ENCODE measurements at regions of chr1 and their contacts with region 1.

Region 1: DNA sequence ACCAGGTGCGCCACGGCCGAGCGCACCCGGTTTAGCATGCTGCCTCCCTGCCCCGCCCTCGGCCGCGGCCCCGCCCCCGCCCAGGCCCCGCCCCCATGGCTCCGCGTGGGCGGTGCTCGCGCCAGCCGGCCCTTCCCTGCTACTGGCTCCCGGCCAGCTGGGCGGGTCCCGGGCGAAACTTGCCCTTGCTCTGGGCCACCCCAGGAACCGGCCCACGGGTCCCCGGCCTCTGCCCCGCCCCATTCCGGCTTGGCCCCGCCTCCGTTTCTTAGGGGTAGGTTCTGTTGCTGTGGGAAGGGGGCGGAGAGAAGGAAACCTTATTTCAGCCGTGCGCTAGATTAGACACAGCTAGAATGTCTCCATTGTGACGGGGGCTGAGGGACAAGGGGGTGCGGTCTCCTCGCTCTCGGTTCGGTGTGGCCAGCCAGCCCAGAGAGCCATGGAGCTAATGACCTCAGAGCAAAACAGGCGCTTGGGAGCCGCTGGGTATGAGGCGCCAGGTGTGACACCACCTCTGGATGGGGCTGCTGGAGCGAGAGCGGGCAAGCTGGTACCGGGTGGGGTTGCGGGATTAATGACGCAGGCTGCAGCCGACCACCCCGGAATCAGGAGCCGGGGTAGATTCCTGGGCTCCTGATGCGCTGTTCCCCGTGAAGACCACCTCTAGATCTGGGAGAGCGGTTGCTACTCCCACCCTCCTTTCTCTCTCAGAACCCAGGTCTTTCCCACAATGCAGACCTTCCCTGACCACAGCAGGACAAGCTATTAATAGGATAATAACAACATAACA is at the start of gene PPM1J:
- DNase-seq: no peak
- H3K4me3 ChIP-seq: peak within 1 kb of the TSS; percentile 68
- CTCF ChIP-seq: no peak

Region 2: GRCh38 chr1:112390775-112391602 is 324.5 kb before region 1 on chr1:
- CTCF ChIA-PET with region 1: interaction called, 24 read pairs
- POLR2A ChIA-PET with region 1: interaction called, 3 read pairs
- DNase-seq: peak; percentile 67
- H3K4me3 ChIP-seq: peak overlapping the region; percentile 50
- CTCF ChIP-seq: peak; percentile 79

Region 3: DNA sequence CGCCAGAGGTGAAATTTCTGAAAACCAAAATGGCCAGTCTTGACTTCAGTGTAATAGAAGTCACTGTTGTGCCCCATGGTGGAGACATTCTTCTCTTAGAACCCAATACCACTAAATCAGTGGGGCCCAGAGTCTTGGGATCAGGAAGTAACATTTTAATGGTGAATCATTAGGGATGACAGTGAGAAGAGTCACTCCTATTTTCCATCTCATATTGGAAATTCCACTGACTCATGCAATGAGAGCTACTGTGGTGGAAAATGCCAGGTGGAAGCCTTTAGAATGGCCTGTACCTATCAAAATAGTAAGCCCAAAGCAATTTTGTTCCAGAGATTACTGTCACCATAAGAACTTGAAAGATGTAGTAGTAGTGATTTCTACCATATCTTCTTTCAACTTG is 20.3 kb after region 1 on chr1:
- CTCF ChIA-PET with region 1: interaction called, 264 read pairs
- POLR2A ChIA-PET with region 1: no interaction called
- DNase-seq: no peak
- H3K4me3 ChIP-seq: no peak overlapping the region
- CTCF ChIP-seq: no peak

Region 4: GRCh38 chr1:112762541-112763517 is 47.4 kb after region 1 on chr1:
- CTCF ChIA-PET with region 1: interaction called, 92 read pairs
- POLR2A ChIA-PET with region 1: no interaction called
- DNase-seq: no peak
- H3K4me3 ChIP-seq: no peak overlapping the region
- CTCF ChIP-seq: no peak

Region 5: GRCh38 chr1:112794654-112795239 is 79.3 kb after region 1 on chr1:
- CTCF ChIA-PET with region 1: interaction called, 1,029 read pairs
- POLR2A ChIA-PET with region 1: no interaction called
- DNase-seq: no peak
- H3K4me3 ChIP-seq: no peak overlapping the region
- CTCF ChIP-seq: no peak

Region 6: DNA sequence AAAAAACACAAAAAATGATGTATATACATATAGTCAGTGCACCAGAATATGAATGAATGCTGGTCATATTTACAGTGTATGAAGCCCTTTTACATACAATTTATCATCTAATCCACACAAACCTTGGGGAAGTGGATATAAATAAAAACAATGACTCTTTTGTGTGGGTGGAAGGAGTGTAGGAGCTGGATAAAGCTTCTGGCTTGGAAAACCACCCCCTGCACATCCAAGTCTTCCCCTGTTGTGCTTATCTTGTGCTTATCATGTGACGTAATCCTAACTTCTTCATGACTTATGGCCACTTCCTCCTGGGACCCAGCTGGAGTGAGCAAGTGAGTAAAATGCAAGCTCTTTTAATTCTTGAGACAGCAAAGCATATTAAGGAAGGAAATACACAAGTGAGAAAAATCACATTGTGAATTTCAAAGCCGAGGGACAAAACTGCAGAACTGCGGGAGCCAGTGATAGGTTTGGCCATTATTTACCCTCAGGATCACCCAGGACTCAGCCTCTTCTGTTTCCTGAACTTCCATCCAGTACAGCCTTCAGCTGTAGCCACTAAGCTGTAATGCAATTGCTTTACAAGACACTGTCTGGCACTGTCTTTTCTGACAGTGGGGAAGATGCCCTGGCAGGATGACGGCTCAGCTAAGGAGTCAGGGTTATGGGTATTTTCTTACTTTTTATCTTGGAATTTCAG is 103.7 kb after region 1 on chr1:
- CTCF ChIA-PET with region 1: interaction called, 10 read pairs
- POLR2A ChIA-PET with region 1: no interaction called
- DNase-seq: no peak
- H3K4me3 ChIP-seq: no peak overlapping the region
- CTCF ChIP-seq: no peak

Region 7: GRCh38 chr1:112925015-112925414 is 209.6 kb after region 1 on chr1:
- CTCF ChIA-PET with region 1: no interaction called
- POLR2A ChIA-PET with region 1: no interaction called
- DNase-seq: no peak
- H3K4me3 ChIP-seq: no peak overlapping the region
- CTCF ChIP-seq: no peak

Region 8: DNA sequence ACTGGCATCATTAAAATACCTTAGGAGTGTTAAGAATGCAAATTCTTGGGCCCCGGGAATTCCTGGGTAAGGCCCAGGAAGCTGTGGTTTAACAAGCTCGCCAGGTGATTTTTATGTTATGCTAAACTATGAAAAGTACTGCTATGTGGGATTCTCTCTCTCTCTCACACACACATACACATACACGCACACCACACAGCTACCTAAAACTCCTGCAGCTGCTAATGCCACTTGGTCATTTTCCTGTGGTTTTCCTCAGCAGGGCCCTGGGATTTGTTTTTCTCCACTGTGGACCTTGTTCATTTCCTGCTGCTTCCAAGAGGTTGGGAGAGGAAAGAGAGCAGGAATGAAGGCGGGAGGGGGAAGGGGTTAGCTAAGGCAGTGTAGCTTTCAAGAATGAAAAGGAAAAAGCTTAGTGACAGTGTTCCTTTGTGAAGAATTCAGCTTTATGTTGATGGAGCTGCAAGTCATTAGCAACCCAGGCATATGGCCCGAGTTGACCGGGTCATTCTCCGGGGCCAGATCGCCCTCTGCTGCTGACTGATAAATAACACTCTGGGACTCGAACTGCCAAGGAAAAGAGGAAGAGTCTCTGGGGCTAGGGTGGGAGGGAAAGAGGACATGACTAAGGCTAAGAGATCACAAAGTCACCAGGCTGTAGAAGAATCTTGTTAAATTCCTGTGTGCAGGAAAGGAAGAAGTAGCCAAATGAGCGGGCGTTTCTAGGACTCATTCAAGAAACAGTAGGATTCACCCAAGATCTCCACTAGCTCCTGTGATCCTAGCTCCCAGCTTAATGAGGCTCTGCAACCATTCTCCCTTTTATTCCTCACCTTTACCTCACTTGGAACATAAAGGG is 327.1 kb after region 1 on chr1:
- CTCF ChIA-PET with region 1: interaction called, 36 read pairs
- POLR2A ChIA-PET with region 1: no interaction called
- DNase-seq: peak; percentile 69
- H3K4me3 ChIP-seq: no peak overlapping the region; the same call in 1 of the 2 replicates
- CTCF ChIP-seq: peak; percentile 57